ENCODE measurements at regions of chr19 and their contacts with region 1.

Region 1: DNA sequence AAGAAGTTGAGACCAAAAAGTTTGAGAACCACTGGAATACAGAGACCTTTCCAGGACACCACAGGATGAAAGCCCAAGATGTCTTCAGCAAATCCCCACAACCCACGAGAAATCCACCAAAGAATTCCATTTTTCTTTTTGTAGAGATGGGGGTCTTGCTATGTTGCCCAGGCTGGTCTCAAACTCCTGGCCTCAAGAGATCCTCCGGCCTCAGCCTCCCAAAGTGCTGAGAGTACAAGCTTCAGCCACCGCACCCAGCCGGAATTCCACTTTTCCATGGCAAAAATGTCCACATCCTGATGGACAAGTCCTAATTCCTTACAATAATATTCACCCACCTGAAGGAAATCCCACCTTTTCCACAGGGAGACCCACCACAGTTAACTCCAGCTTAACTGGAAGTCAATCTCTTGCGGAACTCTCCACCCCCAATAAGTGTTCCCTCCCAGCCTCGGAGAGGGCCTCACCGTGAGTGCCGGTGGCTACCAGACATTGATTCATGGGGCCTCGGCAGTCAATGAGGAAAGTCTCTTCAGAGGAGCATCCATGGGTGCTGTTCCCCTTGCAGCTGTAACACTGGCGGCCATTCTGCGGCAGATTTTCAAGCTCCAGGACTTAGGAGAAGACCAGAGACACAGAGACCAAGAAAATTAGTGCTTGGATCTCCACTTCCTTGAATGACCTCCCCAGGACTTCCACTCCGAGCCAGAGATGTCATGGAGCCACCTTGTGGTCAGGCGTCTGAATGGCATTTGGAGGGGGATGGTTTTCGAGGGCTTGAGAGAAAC is 12.3 kb upstream of the CADM4 start:
- DNase-seq: peak; percentile 66 to 89 (median 76)
- ATAC-seq: peak; percentile 98
- H3K4me3 ChIP-seq: peak overlapping the region; percentile 34
- H3K27ac ChIP-seq: peak overlapping the region; percentile 56
- H3K4me1 ChIP-seq: peaks cover 0 to 3% of the 10 kb centered on the region in 2 experiments; a peak in 1 of 5 replicates
- H3K27me3 ChIP-seq: no peaks in the 10 kb centered on the region
- CTCF ChIP-seq: peak; percentile 89 to 95 (median 91)
- EP300 ChIP-seq: no peak
- POLR2A ChIP-seq: no peak
- RAD21 ChIP-seq: peak; percentile 67 to 87

Region 2: DNA sequence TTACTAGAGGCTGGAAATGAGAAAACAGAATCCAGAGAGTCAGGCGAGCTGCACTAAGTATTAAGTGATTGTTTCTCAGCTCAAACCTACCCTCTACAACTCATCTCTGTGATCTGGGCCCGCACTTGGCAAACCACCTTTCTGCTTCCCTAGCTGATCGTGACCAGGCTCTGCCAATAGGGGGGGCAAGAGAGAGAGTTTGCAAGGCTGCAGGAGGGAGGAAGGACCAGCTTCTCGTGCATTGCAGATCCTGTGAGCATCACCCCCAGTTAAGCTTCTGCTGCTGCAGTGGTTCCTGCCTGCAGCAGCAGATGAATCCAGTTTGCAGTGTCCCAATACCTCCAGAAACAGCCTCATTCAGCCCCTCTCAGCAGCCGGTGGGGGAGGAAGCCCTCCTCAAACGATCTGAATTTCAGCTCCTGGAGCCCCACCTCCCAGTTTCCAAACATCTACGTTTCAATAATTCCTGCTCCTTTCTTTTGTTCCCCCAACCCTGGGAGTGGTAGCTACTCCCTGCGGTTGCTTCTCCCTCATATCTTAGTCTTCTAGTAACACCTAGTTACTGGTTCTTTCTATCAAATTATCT is 96.7 kb before region 1 on chr19:
- CTCF ChIA-PET with region 1: interaction called, 7 read pairs
- POLR2A ChIA-PET with region 1: interaction called, 6 read pairs
- in situ Hi-C with region 1: loop called (anchors 5 kb)
- intact Hi-C with region 1: loop called (anchors 1 kb)
- DNase-seq: peak; percentile 71 to 83 (median 76)
- ATAC-seq: peak; percentile 97
- H3K4me3 ChIP-seq: no peak overlapping the region
- H3K27ac ChIP-seq: no peak overlapping the region
- H3K4me1 ChIP-seq: peaks cover 0 to 8% of the 10 kb centered on the region in 2 experiments; a peak in 1 of 5 replicates
- H3K27me3 ChIP-seq: no peaks in the 10 kb centered on the region
- CTCF ChIP-seq: peak; percentile 85 to 88 (median 87)
- EP300 ChIP-seq: no peak
- POLR2A ChIP-seq: no peak
- RAD21 ChIP-seq: peak; percentile 51 to 70

Region 3: GRCh38 chr19:43675269-43675879 is 23.4 kb after region 1 on chr19:
- CTCF ChIA-PET with region 1: no interaction called
- POLR2A ChIA-PET with region 1: no interaction called
- in situ Hi-C with region 1: no loop called
- intact Hi-C with region 1: no loop called
- DNase-seq: no peak
- ATAC-seq: no peak
- H3K4me3 ChIP-seq: no peak overlapping the region
- H3K27ac ChIP-seq: no peak overlapping the region
- H3K4me1 ChIP-seq: peaks cover 26 to 31% of the 10 kb centered on the region in 2 experiments
- H3K27me3 ChIP-seq: no peaks in the 10 kb centered on the region
- CTCF ChIP-seq: no peak
- EP300 ChIP-seq: no peak
- POLR2A ChIP-seq: no peak
- RAD21 ChIP-seq: no peak

Measured in K562 (cell line).